B cell (primary cell): ENCODE measurements at regions of chr4 and their contacts with region 1.

Region 1: DNA sequence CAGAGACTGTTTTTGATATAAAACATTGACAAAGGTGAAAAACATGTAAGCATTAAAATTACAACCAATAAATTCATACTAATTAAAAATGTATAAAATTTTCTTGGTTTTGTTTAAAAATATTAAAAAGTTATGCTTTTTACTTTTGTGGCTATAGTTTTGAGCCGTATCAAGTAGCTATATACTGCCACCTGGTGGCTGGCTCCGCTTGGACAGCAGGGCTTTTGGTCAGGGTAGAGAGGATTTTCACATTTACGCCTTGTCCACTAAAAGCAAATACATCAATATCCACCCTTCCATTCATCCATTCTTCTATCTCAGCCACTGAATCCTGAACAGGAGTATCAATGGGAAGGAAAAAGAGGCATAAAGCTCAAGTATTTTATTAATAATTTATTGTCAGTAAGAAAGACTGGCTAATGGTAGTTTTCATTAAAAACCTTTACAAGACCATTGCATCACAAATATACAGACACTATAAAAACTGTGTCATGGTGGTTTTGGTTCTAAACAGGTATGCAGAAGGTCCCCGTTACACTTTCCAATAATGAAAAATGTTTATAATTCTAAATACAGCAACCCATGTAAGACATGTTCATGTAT is 32.1 kb upstream of the MTNR1A start:
- DNase-seq: peak; percentile 44
- ATAC-seq: no peak
- H3K4me3 ChIP-seq: no peak overlapping the region
- H3K4me3 Mint-ChIP-seq: no peak overlapping the region
- H3K27ac ChIP-seq: no peak overlapping the region
- H3K27ac Mint-ChIP-seq: no peak overlapping the region
- H3K4me1 ChIP-seq: no peaks in the 10 kb centered on the region
- H3K4me1 Mint-ChIP-seq: no peaks in the 10 kb centered on the region
- H3K27me3 ChIP-seq: no peaks in the 10 kb centered on the region
- H3K27me3 Mint-ChIP-seq: no peaks in the 10 kb centered on the region
- CTCF ChIP-seq: peak; percentile 96

Region 2: DNA sequence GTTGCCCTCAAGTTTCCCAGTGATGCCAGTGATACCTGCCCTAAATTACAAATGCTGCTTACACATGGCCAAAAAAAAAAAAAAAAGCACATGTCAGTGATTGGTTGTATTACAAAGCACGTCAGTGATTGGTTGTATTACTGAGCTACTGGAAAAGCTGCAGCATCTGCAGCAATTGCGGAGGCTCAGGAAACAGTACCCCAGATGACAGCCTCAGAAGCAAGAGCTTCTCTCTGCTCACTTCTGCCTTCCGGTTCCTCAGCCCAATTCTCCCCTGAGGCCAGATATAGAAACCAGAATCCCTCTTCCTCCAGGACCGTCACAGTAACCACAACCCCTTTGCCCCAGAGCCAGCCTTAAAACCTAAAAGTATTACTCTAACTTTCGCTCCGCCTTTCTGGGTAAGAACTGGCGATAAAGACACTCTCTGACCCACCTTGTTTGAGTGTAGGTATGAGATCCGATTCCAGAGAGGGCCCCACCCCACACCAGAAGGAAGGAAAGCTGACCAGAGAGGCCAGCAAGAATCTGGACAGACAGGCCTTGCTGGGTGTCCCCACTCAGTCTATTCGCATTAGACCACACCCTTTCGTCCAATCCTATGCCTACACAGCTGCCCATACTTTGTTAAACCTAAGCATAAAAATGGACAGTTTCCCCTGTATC is 690.6 kb before region 1 on chr4:
- CTCF ChIA-PET with region 1: no interaction called
- POLR2A ChIA-PET with region 1: no interaction called
- intact Hi-C with region 1: no loop called
- DNase-seq: no peak
- ATAC-seq: no peak
- H3K4me3 ChIP-seq: no peak overlapping the region
- H3K4me3 Mint-ChIP-seq: no peak overlapping the region
- H3K27ac ChIP-seq: no peak overlapping the region
- H3K27ac Mint-ChIP-seq: no peak overlapping the region
- H3K4me1 ChIP-seq: no peaks in the 10 kb centered on the region
- H3K4me1 Mint-ChIP-seq: peaks cover 2% of the 10 kb centered on the region
- H3K27me3 ChIP-seq: peaks cover 0 to 2% (median 0%) of the 10 kb centered on the region in 4 experiments
- H3K27me3 Mint-ChIP-seq: peaks cover 27% of the 10 kb centered on the region
- CTCF ChIP-seq: no peak

Region 3: DNA sequence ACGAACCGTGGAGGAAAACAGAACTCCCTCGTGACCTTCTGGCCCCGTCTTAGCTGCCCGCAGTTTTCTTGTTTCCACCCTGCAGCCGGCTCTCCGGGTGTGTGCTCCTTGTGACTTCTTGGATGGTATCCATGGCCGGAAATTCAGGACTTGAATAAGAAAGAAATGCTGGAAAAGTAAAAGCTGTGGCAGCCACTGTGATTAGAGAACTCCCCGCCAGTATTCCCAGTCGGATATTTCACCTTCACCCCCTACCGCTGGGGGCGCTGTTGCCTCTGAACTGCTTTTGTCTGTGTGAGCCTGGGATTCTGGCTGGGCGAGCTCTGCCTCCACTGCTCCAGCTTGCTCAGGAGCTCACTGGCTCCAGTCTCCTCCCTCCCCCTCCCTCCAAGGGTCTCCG is 437.6 kb before region 1 on chr4:
- CTCF ChIA-PET with region 1: interaction called, 3 read pairs
- POLR2A ChIA-PET with region 1: no interaction called
- intact Hi-C with region 1: loop called (anchors 10 kb)
- DNase-seq: no peak
- ATAC-seq: no peak
- H3K4me3 ChIP-seq: no peak overlapping the region
- H3K4me3 Mint-ChIP-seq: no peak overlapping the region
- H3K27ac ChIP-seq: no peak overlapping the region
- H3K27ac Mint-ChIP-seq: no peak overlapping the region
- H3K4me1 ChIP-seq: peaks cover 6 to 10% of the 10 kb centered on the region in 2 donors
- H3K4me1 Mint-ChIP-seq: peaks cover 8% of the 10 kb centered on the region
- H3K27me3 ChIP-seq: peaks cover 0 to 29% (median 20%) of the 10 kb centered on the region in 4 experiments
- H3K27me3 Mint-ChIP-seq: peaks cover 50% of the 10 kb centered on the region
- CTCF ChIP-seq: peak; percentile 57